CD14-positive monocyte (primary cell): ENCODE measurements at regions of chr6 and their contacts with region 1.

Region 1: GRCh38 chr6:43391440-43392031 is 22.1 kb upstream of the ZNF318 start:
- DNase-seq: no peak
- H3K4me3 ChIP-seq: peak overlapping the region in 1 of 3 experiments; percentile 43
- H3K4me3 Mint-ChIP-seq: peak overlapping the region; percentile 75 to 85
- H3K27ac ChIP-seq: no peak overlapping the region
- H3K27ac Mint-ChIP-seq: peak overlapping the region in 2 of 7 donors; percentile 21 to 44
- H3K4me1 ChIP-seq: peaks cover 9 to 24% of the 10 kb centered on the region in 2 donors
- H3K4me1 Mint-ChIP-seq: peaks cover 32% of the 10 kb centered on the region
- H3K27me3 ChIP-seq: peaks cover 24 to 47% of the 10 kb centered on the region in 2 donors
- H3K27me3 Mint-ChIP-seq: peaks cover 45 to 71% (median 60%) of the 10 kb centered on the region in 3 donors
- CTCF ChIP-seq: no peak

Region 2: DNA sequence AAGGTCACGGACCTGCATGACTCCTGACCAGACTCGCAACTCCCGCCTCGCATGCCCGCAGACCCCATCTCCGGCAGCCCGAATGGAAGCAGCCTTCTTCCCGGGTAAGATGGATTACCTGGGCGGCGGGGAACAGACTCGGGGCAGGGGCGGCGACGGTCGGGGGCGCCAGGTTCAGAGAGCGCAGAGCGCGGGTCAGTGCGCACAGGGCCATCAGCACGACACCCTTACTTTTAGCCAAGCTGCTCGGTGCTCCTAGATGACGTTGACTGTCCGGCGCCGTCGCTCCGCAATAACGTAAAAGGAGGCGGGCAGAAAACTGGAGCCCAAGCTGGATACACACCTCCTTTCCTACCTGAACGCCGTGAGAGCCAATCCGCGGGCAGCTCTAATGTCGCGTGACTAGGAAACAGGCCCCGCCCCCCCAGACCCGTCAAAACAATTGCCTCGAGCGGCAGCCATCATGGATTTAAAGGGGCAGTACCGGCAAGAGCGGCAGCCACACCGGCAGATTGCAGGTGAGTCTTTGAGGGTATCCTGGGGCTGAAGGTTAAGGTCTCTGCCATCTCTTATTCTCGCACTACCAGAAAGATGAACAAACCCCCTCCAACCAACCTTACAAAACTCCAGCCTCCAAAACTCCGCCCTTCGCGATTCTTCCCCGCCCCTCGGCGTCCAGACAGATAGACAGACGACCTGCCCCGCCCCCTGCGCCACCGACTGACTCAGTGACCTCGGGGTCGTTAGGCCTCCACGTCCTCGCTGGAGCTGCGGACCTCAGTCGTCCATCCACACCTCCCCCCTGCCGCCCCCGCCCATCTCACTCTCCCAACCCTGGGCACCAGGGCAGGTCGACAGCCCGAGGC is 332.1 kb before region 1 on chr6 and contains the starts of genes KLC4 and MRPL2:
- intact Hi-C with region 1: no loop called
- DNase-seq: peak; percentile 98 to 99 (median 98)
- H3K4me3 ChIP-seq: peak within 1 kb of the TSS; percentile 69 to 99 (median 98)
- H3K4me3 Mint-ChIP-seq: peak within 1 kb of the TSS; percentile 85 to 96
- H3K27ac ChIP-seq: peak within 1 kb of the TSS; percentile 64 to 99
- H3K27ac Mint-ChIP-seq: peak within 1 kb of the TSS; percentile 90 to 100 (median 99)
- H3K4me1 ChIP-seq: peaks cover 14 to 23% of the 10 kb centered on the region in 2 donors
- H3K4me1 Mint-ChIP-seq: peaks cover 25% of the 10 kb centered on the region
- H3K27me3 ChIP-seq: no peaks in the 10 kb centered on the region
- H3K27me3 Mint-ChIP-seq: peaks cover 0 to 2% (median 0%) of the 10 kb centered on the region in 3 donors
- CTCF ChIP-seq: no peak
- polyA plus RNA-seq, gene KLC4: 6.0 to 16.2 (median 6.1) TPM
- polyA plus RNA-seq, gene MRPL2: 23.9 to 26.9 (median 26.3) TPM

Region 3: DNA sequence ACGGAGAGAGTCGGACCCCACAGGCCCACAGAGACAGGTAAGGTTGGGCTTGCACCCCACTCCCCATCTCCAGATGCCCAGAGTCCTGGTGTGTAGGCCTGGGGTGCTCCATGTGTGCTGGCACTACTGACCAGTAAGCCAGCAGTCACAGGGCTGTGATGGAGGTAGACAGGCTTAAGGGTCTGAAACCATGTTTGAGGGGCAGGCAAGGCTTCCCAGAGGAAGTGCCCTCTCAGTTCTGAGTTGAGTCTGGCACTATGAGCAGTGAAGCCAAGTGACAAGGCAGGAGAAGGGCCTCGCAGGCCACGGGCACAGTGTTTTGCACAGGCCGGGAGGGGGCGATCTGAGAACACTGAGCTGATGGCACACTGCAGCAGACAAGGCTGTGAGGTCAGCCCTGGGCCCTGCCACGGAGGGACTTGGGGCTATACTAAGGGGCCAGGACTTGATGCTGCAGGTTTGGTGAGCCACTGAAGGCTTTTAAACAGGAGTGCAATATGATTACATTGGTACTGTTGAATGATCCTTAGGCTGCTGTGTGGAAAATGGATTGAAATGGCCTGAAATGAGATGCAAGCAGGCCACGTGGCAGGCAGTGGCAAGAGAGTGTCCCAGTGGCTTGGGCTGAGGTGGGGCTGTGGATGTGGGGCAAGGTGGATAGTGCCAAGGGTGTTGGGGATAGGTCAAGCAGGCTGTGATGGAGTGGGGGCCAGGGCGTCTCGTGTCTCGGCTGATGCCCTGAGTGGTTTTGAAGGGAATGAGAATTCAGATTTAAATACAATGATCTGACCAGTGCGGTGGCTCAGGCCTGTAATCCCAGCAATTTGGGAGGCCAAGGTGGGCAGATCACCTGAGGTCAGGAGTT is 128.0 kb before region 1 on chr6:
- intact Hi-C with region 1: loop called (anchors 5 to 10 kb)
- DNase-seq: peak; percentile 57 to 74 (median 72)
- H3K4me3 ChIP-seq: no peak overlapping the region
- H3K4me3 Mint-ChIP-seq: peak overlapping the region in 1 of 2 donors; percentile 39
- H3K27ac ChIP-seq: no peak overlapping the region
- H3K27ac Mint-ChIP-seq: peak overlapping the region in 2 of 7 donors; percentile 32 to 79
- H3K4me1 ChIP-seq: no peaks in the 10 kb centered on the region
- H3K4me1 Mint-ChIP-seq: peaks cover 4% of the 10 kb centered on the region
- H3K27me3 ChIP-seq: peaks cover 2 to 11% of the 10 kb centered on the region in 2 donors
- H3K27me3 Mint-ChIP-seq: peaks cover 16 to 26% (median 17%) of the 10 kb centered on the region in 3 donors
- CTCF ChIP-seq: peak; percentile 82

Region 4: DNA sequence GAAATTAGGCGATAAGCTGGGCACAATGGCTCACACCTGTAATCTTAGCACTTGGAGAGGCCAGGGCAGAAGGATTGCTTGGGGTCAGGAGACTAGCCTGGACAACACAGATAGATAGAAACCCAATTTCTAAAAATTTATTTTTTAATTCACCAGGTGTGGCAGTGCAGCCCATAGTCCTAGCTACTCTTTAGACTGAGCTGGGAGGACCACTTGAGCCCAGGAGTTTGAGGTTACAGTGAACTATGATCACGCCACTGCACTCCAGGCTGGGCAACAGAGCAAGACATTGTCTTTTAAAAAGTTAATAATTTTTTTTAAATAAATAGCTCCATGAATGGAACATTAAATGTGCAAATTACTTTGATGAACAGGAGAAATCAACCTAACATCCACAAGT is 30.3 kb before region 1 on chr6:
- intact Hi-C with region 1: loop called in 1 of 2 experiments (anchors 5 kb)
- DNase-seq: no peak
- H3K4me3 ChIP-seq: no peak overlapping the region
- H3K4me3 Mint-ChIP-seq: no peak overlapping the region
- H3K27ac ChIP-seq: no peak overlapping the region
- H3K27ac Mint-ChIP-seq: no peak overlapping the region
- H3K4me1 ChIP-seq: peaks cover 0 to under 1% of the 10 kb centered on the region in 2 donors
- H3K4me1 Mint-ChIP-seq: peaks cover 6% of the 10 kb centered on the region
- H3K27me3 ChIP-seq: no peaks in the 10 kb centered on the region
- H3K27me3 Mint-ChIP-seq: no peaks in the 10 kb centered on the region
- CTCF ChIP-seq: no peak